Posterior cingulate gyrus (tissue), 11 donors: ENCODE measurements at regions of chr6 and their contacts with region 1.

Region 1: GRCh38 chr6:142926494-142927270 is 18.3 kb downstream of the HIVEP2 start:
- DNase-seq: peak; percentile 68 to 97 (median 83)

Region 2: DNA sequence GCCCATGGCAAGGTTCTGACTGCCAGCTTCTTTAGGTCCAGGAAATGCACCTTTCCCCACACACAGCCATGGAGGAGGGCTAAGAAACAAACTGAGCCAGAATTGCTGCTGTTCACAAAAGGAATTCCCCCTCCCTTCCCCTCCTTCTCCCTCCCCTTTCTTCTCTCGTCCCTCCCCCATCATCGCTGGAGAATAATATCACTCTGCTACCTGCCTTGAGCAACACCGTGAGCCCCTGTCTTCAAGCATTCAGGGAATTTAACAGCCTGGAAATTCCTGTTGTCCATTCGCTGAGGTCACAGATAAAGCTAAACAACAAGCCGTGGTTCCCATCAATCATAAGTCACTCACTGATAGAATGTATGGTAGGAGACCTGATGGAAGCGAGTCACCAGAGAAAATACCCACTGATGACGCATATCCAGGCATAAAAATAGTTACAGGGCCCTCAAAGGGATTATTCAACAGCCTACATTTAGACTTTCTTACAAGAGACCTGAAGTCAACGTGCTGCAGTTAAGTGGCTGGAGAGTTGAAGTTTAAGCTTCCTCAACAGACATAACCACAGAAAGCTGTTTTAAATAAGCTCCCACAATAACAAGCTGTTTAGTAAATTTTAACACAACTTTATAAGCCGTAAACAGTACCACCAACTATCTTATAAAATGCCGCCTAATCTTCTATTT is 41.4 kb before region 1 on chr6:
- intact Hi-C with region 1: loop called (anchors 5 kb)
- DNase-seq: no peak

Region 3: DNA sequence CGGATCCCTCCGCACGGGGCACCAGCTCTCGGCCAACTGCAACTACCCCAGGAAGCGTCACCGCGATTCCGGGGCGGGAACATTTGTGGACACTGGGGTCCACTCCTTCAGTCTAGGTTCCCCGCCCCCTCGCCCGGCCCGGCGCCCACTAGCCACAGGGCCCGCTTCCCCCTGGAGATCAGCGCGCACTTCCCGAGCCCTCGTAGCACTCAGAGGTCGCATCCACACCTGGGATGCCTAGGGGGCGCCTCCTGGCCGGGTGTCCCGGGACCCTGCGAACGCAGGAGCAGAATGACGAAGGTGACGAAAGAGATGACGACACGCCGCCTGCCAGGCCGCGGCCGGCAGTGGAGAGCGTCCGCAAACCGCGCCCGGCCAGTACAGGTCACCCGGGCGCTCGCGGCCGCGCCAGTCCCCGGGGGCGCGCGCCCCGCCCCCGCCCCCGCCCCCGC is 133.7 kb after region 1 on chr6:
- intact Hi-C with region 1: no loop called
- DNase-seq: peak; percentile 56 to 96 (median 75)